A673 (cell line): ENCODE measurements at regions of chr11 and their contacts with region 1.

Region 1: DNA sequence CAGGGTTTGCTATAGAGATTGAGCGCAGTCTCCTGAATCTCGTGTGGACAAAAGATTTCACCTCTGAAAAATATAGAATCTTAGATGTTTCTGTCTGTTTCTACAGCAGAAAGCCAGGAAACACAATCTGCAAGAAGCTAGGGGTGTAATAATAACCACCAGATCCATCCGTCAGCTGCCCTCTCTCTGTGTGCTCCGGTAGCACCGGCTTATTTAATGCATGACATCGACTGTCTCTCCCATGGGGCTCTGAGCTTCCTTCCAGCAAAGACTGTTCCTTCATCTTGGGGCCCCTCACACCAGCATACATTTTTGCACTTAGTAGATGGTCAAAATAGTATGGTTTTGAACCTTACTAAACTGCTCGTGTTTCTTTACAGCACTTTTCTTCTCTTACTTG is 20.2 kb downstream of the BARX2 start:
- DNase-seq: no peak
- H3K4me3 ChIP-seq: no peak overlapping the region
- H3K27ac ChIP-seq: no peak overlapping the region
- H3K4me1 ChIP-seq: peaks cover 63% of the 10 kb centered on the region
- H3K27me3 ChIP-seq: no peaks in the 10 kb centered on the region
- CTCF ChIP-seq: no peak

Region 2: GRCh38 chr11:129230006-129230405 is 165.9 kb before region 1 on chr11:
- CTCF ChIA-PET with region 1: no interaction called
- POLR2A ChIA-PET with region 1: no interaction called
- intact Hi-C with region 1: no loop called
- DNase-seq: peak; percentile 54
- H3K4me3 ChIP-seq: no peak overlapping the region
- H3K27ac ChIP-seq: no peak overlapping the region
- H3K4me1 ChIP-seq: no peaks in the 10 kb centered on the region
- H3K27me3 ChIP-seq: no peaks in the 10 kb centered on the region
- CTCF ChIP-seq: peak; percentile 49

Region 3: GRCh38 chr11:129410395-129410960 is 14.6 kb after region 1 on chr11:
- CTCF ChIA-PET with region 1: no interaction called
- POLR2A ChIA-PET with region 1: no interaction called
- intact Hi-C with region 1: loop called (anchors 2 kb)
- DNase-seq: no peak
- H3K4me3 ChIP-seq: no peak overlapping the region
- H3K27ac ChIP-seq: no peak overlapping the region
- H3K4me1 ChIP-seq: peaks cover 17% of the 10 kb centered on the region
- H3K27me3 ChIP-seq: no peaks in the 10 kb centered on the region
- CTCF ChIP-seq: peak; percentile 25; the same call in 1 of the 2 replicates